ENCODE measurements at regions of chr3 and their contacts with region 1.

Region 1: DNA sequence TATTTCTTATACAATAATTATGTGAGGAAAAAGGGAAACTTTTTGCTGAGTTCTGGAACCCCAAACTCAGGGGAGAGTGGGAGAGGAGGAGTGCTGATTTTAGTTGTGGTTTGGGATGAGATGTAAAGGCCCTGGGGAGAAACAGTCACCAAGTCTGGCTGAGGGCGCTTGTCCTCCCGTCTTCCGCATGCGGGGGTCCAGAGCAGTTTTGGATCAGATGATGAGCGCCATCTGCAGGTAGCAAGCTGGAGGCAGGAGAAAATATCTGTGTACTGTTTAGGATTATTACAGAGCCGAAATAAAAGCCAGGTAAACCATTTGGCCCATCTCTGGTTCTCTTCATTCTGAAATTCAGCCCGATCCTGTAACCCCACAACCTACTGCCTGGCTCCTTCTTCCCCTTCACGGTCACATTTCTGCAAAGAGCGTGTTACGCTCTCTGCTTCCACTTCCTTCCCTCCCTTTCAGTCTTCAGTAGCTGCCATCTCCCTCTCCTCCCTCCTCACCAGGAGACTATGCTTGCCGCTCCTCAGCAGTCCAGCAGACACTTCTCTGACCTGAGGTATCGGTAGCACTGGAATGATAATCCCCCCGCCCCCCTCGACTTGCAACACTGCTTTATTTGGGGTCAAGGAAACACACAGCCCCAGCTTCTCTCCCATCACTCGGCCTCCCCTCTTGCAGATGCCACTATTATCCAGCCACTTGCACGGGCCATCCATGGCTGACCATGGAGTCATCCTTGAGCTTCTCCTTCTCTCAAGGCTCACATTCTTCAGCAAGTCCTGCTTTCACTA is 1.4 kb upstream of the PARP14 start:
- DNase-seq: peak; percentile 81 to 88 (median 84)
- ATAC-seq: peak; percentile 62 to 79 (median 77)
- H3K4me3 ChIP-seq: peak overlapping the region in 10 of 12 donors; percentile 3 to 92 (median 76)
- H3K27ac ChIP-seq: peak overlapping the region; percentile 76 to 96 (median 94)
- H3K4me1 ChIP-seq: peaks cover 0 to 55% (median 20%) of the 10 kb centered on the region in 12 donors
- H3K27me3 ChIP-seq: no peaks in the 10 kb centered on the region
- CTCF ChIP-seq: peak; percentile 69 to 89 (median 82)
- POLR2A ChIP-seq: no peak

Region 2: GRCh38 chr3:122383771-122384697 is 295.2 kb before region 1 on chr3 and contains the start of gene FAM162A:
- intact Hi-C with region 1: loop called in 2 of 10 experiments (anchors 2 to 5 kb)
- DNase-seq: peak; percentile 94 to 97 (median 96)
- ATAC-seq: peak; percentile 97 to 98 (median 98)
- H3K4me3 ChIP-seq: peak within 1 kb of the TSS; percentile 63 to 94 (median 72)
- H3K27ac ChIP-seq: peak within 1 kb of the TSS; percentile 49 to 94 (median 90)
- H3K4me1 ChIP-seq: peaks cover 0 to 44% (median 12%) of the 10 kb centered on the region in 12 donors
- H3K27me3 ChIP-seq: no peaks in the 10 kb centered on the region
- CTCF ChIP-seq: peak; percentile 35 to 89 (median 57)
- POLR2A ChIP-seq: peak in 1 of 2 donors; percentile 95
- total RNA-seq, gene FAM162A: 46.7 to 135 (median 108) TPM

Region 3: DNA sequence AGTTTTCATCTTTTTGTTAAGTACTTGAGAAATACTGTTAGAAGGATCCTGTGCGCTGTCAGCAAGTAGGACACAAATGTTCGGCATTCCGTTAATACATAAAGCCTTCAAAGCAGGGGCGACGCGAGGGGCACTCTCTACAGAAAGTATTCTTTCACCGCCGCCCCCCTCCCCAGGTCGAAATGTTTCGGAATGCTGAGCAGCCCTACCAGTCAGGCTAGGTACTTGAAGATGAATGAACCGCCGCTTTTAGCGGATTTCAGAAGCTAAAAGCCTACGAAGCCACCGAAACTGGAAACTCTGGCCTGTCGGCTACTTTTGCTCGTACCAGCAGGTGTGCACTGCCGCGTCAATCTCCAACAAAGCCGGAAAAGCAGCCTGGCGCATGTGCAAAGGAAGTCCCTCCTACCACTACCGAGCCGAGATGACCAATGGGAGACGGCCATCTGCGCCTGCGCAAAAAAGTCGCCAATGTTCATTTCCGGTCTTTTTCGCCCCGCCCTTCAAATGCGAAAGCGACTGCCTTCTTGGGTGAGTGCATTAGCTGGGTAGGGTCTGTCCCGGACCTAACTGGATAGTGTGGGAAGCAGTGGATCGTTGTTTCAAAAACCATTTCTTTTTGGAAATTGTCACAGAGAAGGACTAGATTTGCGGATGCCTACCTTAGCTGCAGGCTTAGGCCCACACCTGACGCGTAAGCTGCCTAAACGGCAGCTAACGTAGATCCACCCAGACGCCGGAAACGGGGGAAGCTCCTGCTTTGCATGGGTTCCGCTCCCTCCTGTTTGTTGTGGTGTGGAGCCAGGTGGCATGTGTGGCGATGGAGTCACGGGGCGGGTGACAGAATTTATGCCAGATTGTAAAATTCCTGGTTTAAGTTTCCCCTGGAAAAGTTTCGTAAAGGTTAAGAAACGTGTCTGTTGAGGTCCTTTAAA is 263.3 kb before region 1 on chr3 and contains the start of gene WDR5B:
- intact Hi-C with region 1: loop called in 2 of 10 experiments (anchors 5 to 10 kb)
- DNase-seq: peak; percentile 97 to 98 (median 98)
- ATAC-seq: peak; percentile 96 to 98 (median 97)
- H3K4me3 ChIP-seq: peak within 1 kb of the TSS; percentile 65 to 94 (median 78)
- H3K27ac ChIP-seq: peak within 1 kb of the TSS; percentile 82 to 96 (median 90)
- H3K4me1 ChIP-seq: peaks cover 0 to 35% (median 22%) of the 10 kb centered on the region in 12 donors
- H3K27me3 ChIP-seq: no peaks in the 10 kb centered on the region
- CTCF ChIP-seq: peak in 2 of 12 donors; percentile 31 to 34
- POLR2A ChIP-seq: peak; percentile 4 to 82
- total RNA-seq, gene WDR5B: 1.8 to 4.9 (median 2.9) TPM

Region 4: GRCh38 chr3:122468896-122469533 is 210.3 kb before region 1 on chr3:
- intact Hi-C with region 1: loop called in 2 of 10 experiments (anchors 5 to 10 kb)
- DNase-seq: no peak
- ATAC-seq: no peak
- H3K4me3 ChIP-seq: no peak overlapping the region
- H3K27ac ChIP-seq: no peak overlapping the region
- H3K4me1 ChIP-seq: peaks cover 0 to 27% (median 8%) of the 10 kb centered on the region in 12 donors
- H3K27me3 ChIP-seq: no peaks in the 10 kb centered on the region
- CTCF ChIP-seq: no peak
- POLR2A ChIP-seq: no peak

Region 5: GRCh38 chr3:122564155-122564912 is 114.9 kb before region 1 on chr3 and contains the starts of genes DTX3L and PARP9:
- intact Hi-C with region 1: loop called (anchors 1 to 5 kb)
- DNase-seq: peak; percentile 89 to 92 (median 90)
- ATAC-seq: peak; percentile 94 to 99 (median 99)
- H3K4me3 ChIP-seq: peak within 1 kb of the TSS; percentile 66 to 98 (median 76)
- H3K27ac ChIP-seq: peak within 1 kb of the TSS; percentile 86 to 99 (median 94)
- H3K4me1 ChIP-seq: peaks cover 0 to 76% (median 22%) of the 10 kb centered on the region in 12 donors
- H3K27me3 ChIP-seq: no peaks in the 10 kb centered on the region
- CTCF ChIP-seq: no peak
- POLR2A ChIP-seq: peak in 1 of 2 donors; percentile 49
- total RNA-seq, gene DTX3L: 10.2 to 78.2 (median 13.4) TPM
- total RNA-seq, gene PARP9: 8.5 to 73.0 (median 15.1) TPM